ENCODE measurements at regions of chr11 and their contacts with region 1.

Region 1: GRCh38 chr11:101692980-101693379 is 109.2 kb upstream of the TRPC6 start:
- DNase-seq: no peak
- ATAC-seq: no peak
- H3K4me3 Mint-ChIP-seq: no peak overlapping the region
- H3K27ac Mint-ChIP-seq: no peak overlapping the region
- H3K4me1 Mint-ChIP-seq: no peaks in the 10 kb centered on the region
- H3K27me3 Mint-ChIP-seq: no peaks in the 10 kb centered on the region

Region 2: DNA sequence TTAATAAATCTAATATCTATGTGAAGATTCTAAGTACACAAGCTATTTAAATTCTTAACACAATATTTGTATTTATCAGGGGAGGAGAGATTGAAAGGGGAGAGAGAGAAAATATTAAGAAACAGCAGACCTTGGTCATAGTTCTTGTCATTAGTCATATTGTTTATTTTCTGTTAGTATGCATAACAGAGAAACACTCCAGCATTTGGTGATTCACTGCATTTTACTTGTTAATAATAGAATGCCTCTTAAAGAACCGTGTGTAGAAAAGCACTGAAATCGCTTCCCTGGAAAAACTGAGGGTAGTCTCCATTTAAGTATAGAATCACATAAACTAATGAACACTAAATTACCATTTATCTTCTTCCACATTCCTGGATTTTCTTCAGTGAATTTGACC is 13.6 kb after region 1 on chr11:
- CTCF ChIA-PET with region 1: no interaction called
- POLR2A ChIA-PET with region 1: no interaction called
- intact Hi-C with region 1: loop called in 1 of 2 experiments (anchors 2 kb)
- DNase-seq: no peak
- ATAC-seq: no peak
- H3K4me3 Mint-ChIP-seq: no peak overlapping the region
- H3K27ac Mint-ChIP-seq: no peak overlapping the region
- H3K4me1 Mint-ChIP-seq: no peaks in the 10 kb centered on the region
- H3K27me3 Mint-ChIP-seq: no peaks in the 10 kb centered on the region

Measured in activated CD4-positive, alpha-beta T cell treated with anti-CD3 and anti-CD28 coated beads for 36 hours (primary cell).